ENCODE measurements at regions of chr4 and their contacts with region 1.

Region 1: GRCh38 chr4:7843831-7844593 is 95.6 kb downstream of the AFAP1 start:
- DNase-seq: peak; percentile 83
- ATAC-seq: peak; percentile 87
- H3K4me3 Mint-ChIP-seq: no peak overlapping the region
- H3K27ac Mint-ChIP-seq: peak overlapping the region; percentile 52
- H3K4me1 Mint-ChIP-seq: peaks cover 27% of the 10 kb centered on the region
- H3K27me3 Mint-ChIP-seq: no peaks in the 10 kb centered on the region

Region 2: GRCh38 chr4:7876201-7876875 is 32.3 kb after region 1 on chr4:
- CTCF ChIA-PET with region 1: interaction called, 11 read pairs
- POLR2A ChIA-PET with region 1: no interaction called
- intact Hi-C with region 1: no loop called
- DNase-seq: peak; percentile 53
- ATAC-seq: peak; percentile 75
- H3K4me3 Mint-ChIP-seq: peak overlapping the region; percentile 32
- H3K27ac Mint-ChIP-seq: peak overlapping the region; percentile 77
- H3K4me1 Mint-ChIP-seq: peaks cover 40% of the 10 kb centered on the region
- H3K27me3 Mint-ChIP-seq: no peaks in the 10 kb centered on the region